Uterus (tissue), 4 donors: ENCODE measurements at regions of chr12 and their contacts with region 1.

Region 1: DNA sequence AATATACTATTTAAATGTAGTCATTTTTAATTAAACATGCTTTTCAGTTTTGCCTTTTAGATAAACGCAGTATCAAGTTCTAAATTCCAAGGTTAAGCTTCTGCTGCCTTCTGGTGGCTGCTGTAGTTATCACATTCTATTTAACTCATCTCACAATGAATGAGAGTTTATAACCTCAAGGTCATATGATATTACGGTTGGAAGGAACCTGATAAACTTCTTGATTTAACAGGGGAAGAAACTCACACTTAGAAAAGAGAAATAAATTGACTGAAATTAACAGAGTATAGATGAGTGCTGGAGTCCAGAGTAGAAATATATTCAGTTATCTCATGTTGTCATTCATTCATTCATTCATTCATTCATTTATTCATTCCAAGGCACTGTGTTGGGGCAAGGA is 31.9 kb downstream of the GUCY2C start:
- DNase-seq: peak in 1 of 2 donors; percentile 34
- H3K4me3 ChIP-seq: no peak overlapping the region
- H3K27ac ChIP-seq: no peak overlapping the region
- H3K4me1 ChIP-seq: no peaks in the 10 kb centered on the region
- H3K27me3 ChIP-seq: no peaks in the 10 kb centered on the region
- CTCF ChIP-seq: peak; percentile 70 to 75 (median 74)
- POLR2A ChIP-seq: no peak

Region 2: DNA sequence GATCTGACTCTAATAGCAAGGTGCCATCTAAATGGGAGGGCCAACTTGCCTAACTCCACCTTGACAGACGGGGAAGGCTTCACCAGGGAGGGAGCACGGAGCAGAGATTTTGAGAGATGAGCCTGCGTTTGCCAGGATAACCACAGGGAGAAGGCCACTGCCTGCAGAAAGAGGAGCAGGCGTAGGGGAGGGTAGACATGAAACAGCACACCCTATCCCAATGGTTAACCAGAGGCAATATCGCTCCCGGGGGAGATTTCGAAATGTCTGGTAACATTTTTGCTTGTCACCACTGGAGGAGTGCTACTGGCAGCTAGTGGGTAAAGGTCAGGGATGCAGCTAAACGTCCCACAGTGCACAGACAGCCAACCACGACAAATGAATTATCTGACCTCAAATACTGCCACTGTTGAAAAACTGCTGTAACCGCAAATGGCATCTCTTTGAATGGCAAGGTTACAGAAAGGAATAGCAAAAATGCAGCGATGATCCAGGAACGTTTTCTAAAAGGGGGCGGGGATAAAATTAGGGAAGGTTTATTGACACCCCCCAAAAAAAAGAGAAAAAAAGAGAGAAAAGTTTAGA is 425.1 kb before region 1 on chr12:
- intact Hi-C with region 1: loop called (anchors 10 kb)
- DNase-seq: peak in 1 of 2 donors; percentile 24
- H3K4me3 ChIP-seq: no peak overlapping the region
- H3K27ac ChIP-seq: no peak overlapping the region
- H3K4me1 ChIP-seq: no peaks in the 10 kb centered on the region
- H3K27me3 ChIP-seq: no peaks in the 10 kb centered on the region
- CTCF ChIP-seq: no peak
- POLR2A ChIP-seq: no peak

Region 3: DNA sequence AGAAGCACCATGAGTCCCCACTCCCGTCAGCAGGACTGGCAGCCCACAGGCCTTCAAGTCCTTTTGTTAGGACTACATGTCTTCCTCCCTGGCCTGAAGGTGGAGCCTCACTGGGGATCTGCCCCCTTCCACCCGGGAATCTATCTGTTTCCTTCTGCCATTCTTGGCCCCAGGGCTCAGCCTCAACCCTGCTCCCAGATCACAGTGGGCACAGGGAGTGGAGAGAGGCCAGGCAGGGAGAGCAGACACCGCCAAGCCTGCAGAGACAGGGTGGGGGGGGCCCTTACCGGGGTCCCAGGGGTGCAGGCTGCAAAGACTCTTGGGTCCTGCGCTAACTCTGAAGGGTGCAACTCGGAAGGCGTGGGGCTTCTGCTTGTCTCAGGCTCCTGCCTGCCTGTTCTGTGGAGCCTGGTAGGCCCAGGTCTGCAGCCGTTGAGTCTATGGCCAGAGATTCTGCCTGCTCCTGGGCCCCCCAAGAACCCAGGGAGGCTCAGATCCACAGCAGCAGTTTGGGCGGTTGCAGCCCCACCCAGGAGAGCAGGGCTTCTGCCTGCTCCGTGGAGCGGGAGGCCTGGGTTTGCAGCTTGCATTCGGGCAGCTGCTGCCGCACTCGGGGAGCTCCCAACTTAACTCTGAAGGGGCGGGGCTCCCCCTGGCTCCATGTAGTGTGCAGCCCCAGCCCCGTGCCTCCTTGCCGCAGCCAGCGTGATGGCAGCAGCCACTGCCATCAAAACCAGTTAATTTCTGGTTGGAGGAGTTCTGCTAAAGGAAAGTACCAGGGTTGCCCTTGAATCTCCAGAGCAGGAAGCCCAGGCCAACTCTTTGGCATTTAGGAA is 75.1 kb before region 1 on chr12:
- intact Hi-C with region 1: no loop called
- DNase-seq: no peak
- H3K4me3 ChIP-seq: no peak overlapping the region
- H3K27ac ChIP-seq: no peak overlapping the region
- H3K4me1 ChIP-seq: no peaks in the 10 kb centered on the region
- H3K27me3 ChIP-seq: no peaks in the 10 kb centered on the region
- CTCF ChIP-seq: no peak
- POLR2A ChIP-seq: no peak

Region 4: DNA sequence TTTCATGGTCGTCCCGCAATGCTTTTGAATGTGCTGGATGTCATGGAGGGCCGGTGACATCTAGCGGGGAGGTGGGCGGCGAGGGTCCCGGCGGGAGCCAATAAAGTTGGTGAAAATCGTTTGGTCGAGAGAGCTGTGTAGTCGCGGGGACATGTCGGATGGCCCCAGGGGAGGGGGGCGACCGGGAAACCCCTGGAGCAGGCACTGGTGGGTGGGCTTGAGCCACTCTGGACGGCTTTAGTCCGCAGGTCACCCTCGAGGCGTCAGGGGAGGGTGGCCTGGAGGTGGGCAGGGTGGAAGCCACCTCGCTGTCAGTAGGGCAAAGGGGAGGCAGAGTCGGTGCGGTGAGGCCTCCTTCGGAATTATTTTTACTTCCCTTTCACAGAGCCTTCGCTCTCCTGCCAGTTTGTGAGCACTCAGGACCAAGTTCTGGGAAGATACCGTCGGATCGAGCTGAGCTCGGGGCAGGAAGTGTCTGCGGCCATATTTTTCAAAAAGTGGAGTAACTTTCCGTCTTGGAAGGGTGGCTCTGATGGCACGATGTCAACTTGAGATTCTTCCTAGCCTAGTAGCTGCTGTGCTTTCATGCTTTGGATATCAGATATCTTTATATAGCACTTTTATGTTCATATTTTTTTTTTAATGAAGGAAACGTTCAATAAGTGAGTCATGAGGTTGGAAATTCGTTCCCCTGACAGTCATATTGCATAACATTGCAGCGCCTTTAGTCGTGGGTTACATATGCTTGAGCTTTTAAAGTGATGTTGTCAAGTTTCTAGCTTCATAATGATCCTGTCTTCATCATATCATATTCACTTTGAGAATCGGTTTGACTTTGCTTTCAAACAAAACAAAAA is 110.6 kb after region 1 on chr12:
- intact Hi-C with region 1: no loop called
- DNase-seq: peak; percentile 53 to 70
- H3K4me3 ChIP-seq: peak overlapping the region; percentile 76 to 80
- H3K27ac ChIP-seq: peak overlapping the region; percentile 91 to 92
- H3K4me1 ChIP-seq: no peaks in the 10 kb centered on the region
- H3K27me3 ChIP-seq: no peaks in the 10 kb centered on the region
- CTCF ChIP-seq: peak in 1 of 4 experiments; percentile 3
- POLR2A ChIP-seq: peak in 1 of 2 donors; percentile 6